Activated CD4-positive, alpha-beta memory T cell treated with anti-CD3 and anti-CD28 coated beads for 36 hours (primary cell): ENCODE measurements at regions of chr10 and their contacts with region 1.

Region 1: DNA sequence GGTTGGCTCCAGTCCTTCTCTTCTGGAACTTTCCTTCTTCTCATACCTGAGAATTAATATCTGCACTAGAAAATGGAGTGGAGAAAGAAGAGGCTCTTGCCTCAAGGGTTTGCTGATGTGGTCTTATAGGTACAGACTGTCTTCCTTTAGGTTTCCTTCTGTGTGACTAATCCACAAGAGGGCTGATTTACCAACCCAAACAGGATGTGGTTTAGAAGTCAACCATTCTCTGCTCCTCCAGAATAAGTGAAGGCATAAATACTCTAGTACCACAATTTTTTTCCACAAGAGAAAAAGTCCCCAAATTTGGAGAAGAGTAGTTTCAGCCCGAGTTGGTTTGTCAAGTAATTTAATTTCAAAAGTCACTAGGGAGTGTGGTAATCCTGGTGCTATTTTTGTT is 85.8 kb downstream of the NRP1 start:
- DNase-seq: no peak
- H3K4me3 Mint-ChIP-seq: peak overlapping the region; percentile 38
- H3K27ac Mint-ChIP-seq: peak overlapping the region; percentile 64
- H3K4me1 Mint-ChIP-seq: peaks cover 60% of the 10 kb centered on the region
- H3K27me3 Mint-ChIP-seq: peaks cover 11% of the 10 kb centered on the region

Region 2: GRCh38 chr10:33115738-33116719 is 132.6 kb before region 1 on chr10:
- CTCF ChIA-PET with region 1: no interaction called
- POLR2A ChIA-PET with region 1: interaction called, 3 read pairs
- intact Hi-C with region 1: loop called (anchors 1 kb)
- DNase-seq: peak; percentile 53
- H3K4me3 Mint-ChIP-seq: peak overlapping the region; percentile 47
- H3K27ac Mint-ChIP-seq: peak overlapping the region; percentile 81
- H3K4me1 Mint-ChIP-seq: peaks cover 92% of the 10 kb centered on the region
- H3K27me3 Mint-ChIP-seq: peaks cover 4% of the 10 kb centered on the region

Region 3: GRCh38 chr10:33193057-33193700 is 55.5 kb before region 1 on chr10:
- CTCF ChIA-PET with region 1: interaction called, 10 read pairs
- POLR2A ChIA-PET with region 1: no interaction called
- intact Hi-C with region 1: no loop called
- DNase-seq: peak; percentile 84
- H3K4me3 Mint-ChIP-seq: no peak overlapping the region
- H3K27ac Mint-ChIP-seq: no peak overlapping the region
- H3K4me1 Mint-ChIP-seq: peaks cover 5% of the 10 kb centered on the region
- H3K27me3 Mint-ChIP-seq: peaks cover 8% of the 10 kb centered on the region

Region 4: GRCh38 chr10:33258967-33259366 is 10.3 kb after region 1 on chr10:
- CTCF ChIA-PET with region 1: interaction called, 4 read pairs
- POLR2A ChIA-PET with region 1: interaction called, 4 read pairs
- intact Hi-C with region 1: loop called (anchors 1 kb)
- DNase-seq: no peak
- H3K4me3 Mint-ChIP-seq: no peak overlapping the region
- H3K27ac Mint-ChIP-seq: no peak overlapping the region
- H3K4me1 Mint-ChIP-seq: peaks cover 10% of the 10 kb centered on the region
- H3K27me3 Mint-ChIP-seq: peaks cover 51% of the 10 kb centered on the region

Region 5: GRCh38 chr10:33270971-33271370 is 22.3 kb after region 1 on chr10:
- CTCF ChIA-PET with region 1: no interaction called
- POLR2A ChIA-PET with region 1: no interaction called
- intact Hi-C with region 1: no loop called
- DNase-seq: no peak
- H3K4me3 Mint-ChIP-seq: no peak overlapping the region
- H3K27ac Mint-ChIP-seq: no peak overlapping the region
- H3K4me1 Mint-ChIP-seq: peaks cover 3% of the 10 kb centered on the region
- H3K27me3 Mint-ChIP-seq: peaks cover 29% of the 10 kb centered on the region

Region 6: DNA sequence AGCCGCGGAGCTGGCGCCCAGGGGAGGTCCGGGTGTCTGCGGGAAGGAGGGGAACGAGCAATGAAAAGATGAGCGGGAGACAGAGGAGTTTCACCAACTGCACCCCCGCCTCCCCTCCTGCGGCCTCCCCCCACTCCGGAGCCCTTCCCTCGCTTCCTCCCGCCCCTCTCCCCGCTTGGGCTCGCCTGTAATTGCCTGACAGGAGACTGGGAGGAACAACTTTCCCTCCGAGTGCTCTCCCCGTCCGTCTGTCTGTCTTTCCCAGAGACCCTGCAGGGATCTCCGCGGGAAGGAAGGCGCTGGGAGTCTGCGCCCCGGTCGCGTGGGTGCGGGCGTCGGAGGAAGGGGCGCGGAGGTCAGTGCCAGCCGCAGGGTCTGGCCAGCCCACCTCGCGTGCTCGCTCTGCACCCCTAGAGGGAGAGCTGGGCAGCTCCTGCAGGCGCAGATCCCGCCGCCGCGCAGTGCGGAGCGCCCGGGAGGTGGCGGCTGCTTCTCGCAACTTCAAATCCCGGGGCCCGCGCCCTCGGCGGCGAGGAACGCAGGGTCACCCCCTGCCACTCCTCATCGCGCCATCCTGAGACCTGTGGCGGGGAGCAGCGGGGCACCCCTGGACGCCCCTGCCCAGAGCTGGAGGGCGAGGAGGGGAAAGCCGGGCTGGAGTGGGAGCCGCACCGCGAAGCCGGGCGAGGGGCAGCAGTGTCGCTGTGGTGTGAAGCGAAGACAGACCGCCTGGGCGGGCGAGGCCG is 86.3 kb after region 1 on chr10:
- CTCF ChIA-PET with region 1: no interaction called
- POLR2A ChIA-PET with region 1: no interaction called
- intact Hi-C with region 1: no loop called
- DNase-seq: peak; percentile 56
- H3K4me3 Mint-ChIP-seq: peak overlapping the region; percentile 64
- H3K27ac Mint-ChIP-seq: no peak overlapping the region
- H3K4me1 Mint-ChIP-seq: peaks cover 27% of the 10 kb centered on the region
- H3K27me3 Mint-ChIP-seq: peaks cover 58% of the 10 kb centered on the region

Region 7: DNA sequence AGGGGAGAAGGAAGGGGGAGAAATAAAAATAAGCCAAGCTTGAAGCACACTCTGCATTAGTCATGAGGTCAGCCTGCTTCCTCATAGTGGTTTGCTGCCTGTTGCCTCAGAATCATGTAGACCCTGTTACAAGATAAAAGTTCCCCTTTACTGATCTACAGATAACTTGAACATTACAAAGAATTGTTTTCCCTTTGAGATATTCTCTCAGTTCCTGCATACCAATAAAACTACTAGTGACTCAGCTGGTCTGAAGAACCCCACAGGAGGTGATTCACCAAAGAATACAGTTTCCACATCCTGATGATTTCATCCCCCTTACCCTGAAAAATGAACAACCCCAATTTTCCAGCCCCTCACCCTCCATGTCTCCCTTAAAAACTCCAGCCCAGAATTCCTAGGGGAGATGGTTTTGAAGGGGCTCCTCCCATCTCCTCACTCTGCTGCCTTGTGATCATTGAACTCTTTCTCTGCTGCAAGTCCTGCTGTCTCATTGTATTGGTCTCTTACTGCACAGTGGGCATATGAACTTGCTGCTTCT is 117.3 kb after region 1 on chr10:
- CTCF ChIA-PET with region 1: no interaction called
- POLR2A ChIA-PET with region 1: interaction called, 3 read pairs
- intact Hi-C with region 1: loop called (anchors 1 kb)
- DNase-seq: peak; percentile 51
- H3K4me3 Mint-ChIP-seq: no peak overlapping the region
- H3K27ac Mint-ChIP-seq: peak overlapping the region; percentile 84
- H3K4me1 Mint-ChIP-seq: peaks cover 19% of the 10 kb centered on the region
- H3K27me3 Mint-ChIP-seq: peaks cover 25% of the 10 kb centered on the region

Region 8: DNA sequence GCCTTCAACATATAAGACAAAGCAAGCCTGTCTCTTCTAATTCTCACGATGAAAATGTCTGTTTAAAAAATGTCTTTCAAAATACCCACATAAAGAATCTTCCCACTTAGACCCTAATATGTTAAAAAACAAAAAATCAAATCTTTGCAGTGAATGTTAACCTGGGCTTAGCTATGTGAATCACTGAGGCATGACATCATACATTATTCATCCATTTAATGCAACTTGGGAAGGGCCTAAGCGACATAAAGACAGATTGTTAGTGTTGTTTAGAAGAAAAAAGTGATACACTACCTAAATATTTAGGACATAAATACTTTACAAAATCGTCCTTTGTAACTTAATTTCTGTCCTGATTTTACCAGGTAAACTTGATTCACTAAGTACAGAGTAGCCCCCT is 734.4 kb after region 1 on chr10:
- CTCF ChIA-PET with region 1: no interaction called
- POLR2A ChIA-PET with region 1: no interaction called
- intact Hi-C with region 1: no loop called
- DNase-seq: no peak
- H3K4me3 Mint-ChIP-seq: no peak overlapping the region
- H3K27ac Mint-ChIP-seq: no peak overlapping the region
- H3K4me1 Mint-ChIP-seq: no peaks in the 10 kb centered on the region
- H3K27me3 Mint-ChIP-seq: peaks cover 2% of the 10 kb centered on the region

Region 9: DNA sequence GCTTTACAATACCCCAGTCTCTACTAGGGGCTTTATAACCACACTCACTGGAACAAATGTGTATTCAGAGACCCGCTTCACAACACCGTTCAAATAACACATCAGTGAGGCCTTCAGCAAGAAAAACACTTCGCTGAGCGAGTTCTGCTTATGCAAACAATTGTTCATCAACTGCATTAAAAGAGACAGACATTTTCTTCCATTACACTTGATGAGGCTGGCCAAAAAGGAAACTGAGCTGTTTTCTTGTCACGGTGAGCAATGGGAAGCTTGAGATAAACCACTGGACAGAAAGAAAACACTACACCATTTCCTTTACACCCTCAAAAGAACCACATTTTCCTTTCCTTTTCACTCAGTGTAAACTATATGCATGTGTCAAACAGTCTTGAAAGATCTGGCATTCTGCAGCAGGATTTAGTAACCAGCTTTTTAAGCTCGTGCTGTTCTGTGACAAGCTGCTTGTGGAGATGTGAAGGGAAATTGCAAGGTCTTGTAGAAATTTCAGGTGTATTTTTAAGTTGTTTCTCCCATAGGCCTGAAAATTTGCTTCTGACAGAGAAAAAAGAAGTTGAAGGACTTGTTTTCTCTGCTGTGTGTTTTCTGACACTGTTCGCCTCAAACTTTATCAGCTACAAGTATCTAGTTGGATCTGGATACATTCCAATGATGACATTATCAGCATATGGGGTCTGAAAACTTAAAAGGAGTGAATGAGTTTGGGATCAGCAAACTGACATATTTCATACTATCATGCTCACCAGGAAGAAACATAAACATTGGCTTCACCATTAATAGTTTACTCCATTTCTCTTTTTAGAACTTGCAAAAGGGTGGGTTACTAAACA is 873.4 kb after region 1 on chr10:
- CTCF ChIA-PET with region 1: no interaction called
- POLR2A ChIA-PET with region 1: no interaction called
- intact Hi-C with region 1: loop called (anchors 1 kb)
- DNase-seq: peak; percentile 18
- H3K4me3 Mint-ChIP-seq: no peak overlapping the region
- H3K27ac Mint-ChIP-seq: no peak overlapping the region
- H3K4me1 Mint-ChIP-seq: peaks cover 24% of the 10 kb centered on the region
- H3K27me3 Mint-ChIP-seq: peaks cover 3% of the 10 kb centered on the region